ENCODE measurements at regions of chr3 and their contacts with region 1.

Region 1: DNA sequence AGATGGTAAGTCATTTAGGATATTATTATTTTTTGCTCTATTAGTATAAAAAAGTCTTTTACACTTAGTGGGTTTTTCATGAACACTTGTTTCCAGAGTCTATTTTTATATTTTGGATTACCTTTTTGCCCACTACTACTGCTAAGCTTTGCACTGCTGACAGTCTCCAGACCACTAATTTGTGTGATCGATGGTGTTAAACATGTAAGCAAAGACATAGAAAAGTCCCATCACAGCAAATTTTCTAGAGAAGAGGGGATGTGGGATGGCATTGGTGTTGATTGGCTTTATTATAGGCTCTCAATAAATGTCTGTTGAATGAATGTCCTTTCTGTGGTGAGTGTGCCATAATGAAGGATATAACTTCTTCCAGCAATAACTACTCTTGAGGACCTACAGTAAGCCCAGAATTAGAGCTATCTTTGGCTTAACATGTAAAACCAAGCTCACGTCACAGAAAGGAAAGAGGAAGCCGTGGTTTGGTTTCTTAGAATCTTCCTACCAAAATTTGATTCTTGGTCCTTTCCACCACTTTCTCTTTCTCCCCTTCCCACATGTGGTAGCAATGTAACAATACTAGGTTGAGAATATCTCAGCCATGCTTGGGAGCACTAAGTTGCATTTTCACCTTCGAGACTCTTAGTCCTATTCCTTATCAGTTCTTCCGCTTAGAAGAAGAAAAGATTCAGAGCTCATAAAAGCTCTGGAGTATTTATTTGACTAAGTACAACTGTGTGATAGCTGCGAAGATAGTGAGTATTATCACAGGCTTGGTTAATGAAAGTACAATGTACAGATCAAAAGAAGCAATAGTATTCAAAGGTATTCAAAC is 90.6 kb upstream of the UMPS start:
- DNase-seq: no peak
- H3K4me3 Mint-ChIP-seq: peak overlapping the region; percentile 62
- H3K27ac Mint-ChIP-seq: peak overlapping the region; percentile 80
- H3K4me1 Mint-ChIP-seq: peaks cover 52% of the 10 kb centered on the region
- H3K27me3 Mint-ChIP-seq: peaks cover 52% of the 10 kb centered on the region

Region 2: DNA sequence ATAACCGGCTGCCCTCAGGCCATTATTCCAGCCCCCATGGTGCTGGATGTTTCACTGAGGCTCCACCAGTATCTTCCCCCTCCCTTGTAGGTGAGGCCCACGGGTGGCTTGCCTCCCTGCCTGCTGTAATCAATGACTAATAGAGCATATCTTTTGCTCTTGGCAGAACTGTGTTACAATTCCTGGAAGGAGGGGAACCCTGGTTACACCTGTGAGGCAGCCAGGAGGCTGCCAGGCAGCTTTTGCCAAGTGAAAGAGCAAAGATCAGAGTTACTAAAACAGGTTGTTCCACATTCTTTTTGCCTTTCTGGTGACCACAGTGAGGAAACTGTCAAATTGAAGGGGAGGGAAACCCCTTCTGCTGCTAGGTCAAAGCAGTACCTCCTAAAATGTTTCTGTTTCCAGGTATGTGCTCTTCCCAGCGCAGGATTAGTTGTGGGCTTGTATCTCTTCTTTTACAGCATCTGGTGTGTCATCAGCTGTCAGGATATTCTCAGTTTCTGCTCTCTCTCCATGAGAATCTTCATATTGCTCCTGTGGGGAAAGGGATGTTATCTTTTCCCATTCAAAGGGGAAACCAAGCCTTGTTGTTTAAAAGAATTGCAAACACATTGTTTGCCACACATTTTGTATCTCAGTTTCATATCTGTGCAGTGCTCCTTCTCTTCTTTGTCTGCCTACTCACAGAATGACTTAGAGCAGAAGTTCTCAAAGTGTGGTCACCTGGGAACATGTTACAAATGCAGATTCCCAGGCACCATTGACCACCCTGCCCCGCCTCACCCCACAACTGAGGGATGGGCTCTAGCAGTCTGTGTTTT is 46.8 kb before region 1 on chr3:
- intact Hi-C with region 1: loop called (anchors 1 kb)
- DNase-seq: no peak
- H3K4me3 Mint-ChIP-seq: no peak overlapping the region
- H3K27ac Mint-ChIP-seq: no peak overlapping the region
- H3K4me1 Mint-ChIP-seq: peaks cover 16% of the 10 kb centered on the region
- H3K27me3 Mint-ChIP-seq: peaks cover 21% of the 10 kb centered on the region

Region 3: GRCh38 chr3:124620600-124621063 is 19.0 kb before region 1 on chr3:
- intact Hi-C with region 1: loop called (anchors 1 kb)
- DNase-seq: peak; percentile 11
- H3K4me3 Mint-ChIP-seq: peak overlapping the region; percentile 42
- H3K27ac Mint-ChIP-seq: peak overlapping the region; percentile 73
- H3K4me1 Mint-ChIP-seq: peaks cover 22% of the 10 kb centered on the region
- H3K27me3 Mint-ChIP-seq: peaks cover 6% of the 10 kb centered on the region

Region 4: DNA sequence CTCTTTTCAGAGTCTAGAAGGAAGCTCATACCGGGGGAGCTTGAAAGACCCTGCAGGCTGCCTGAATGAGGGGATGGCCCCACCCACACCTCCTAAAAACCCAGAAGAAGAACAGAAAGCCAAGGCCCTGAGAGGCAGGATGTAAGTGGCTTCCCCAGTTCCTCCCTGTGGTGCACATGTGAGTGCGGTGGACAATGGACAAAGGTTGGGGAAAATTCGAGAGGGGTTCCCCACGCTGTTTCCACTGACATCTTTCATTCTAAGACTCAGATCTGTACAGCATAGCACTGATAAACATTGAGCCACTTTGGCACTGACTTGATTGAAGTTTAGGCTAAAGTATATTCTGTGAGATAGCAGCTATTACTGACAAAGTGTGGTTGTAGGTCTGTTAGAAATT is 11.2 kb after region 1 on chr3:
- intact Hi-C with region 1: loop called (anchors 1 kb)
- DNase-seq: no peak
- H3K4me3 Mint-ChIP-seq: no peak overlapping the region
- H3K27ac Mint-ChIP-seq: peak overlapping the region; percentile 27
- H3K4me1 Mint-ChIP-seq: peaks cover 15% of the 10 kb centered on the region
- H3K27me3 Mint-ChIP-seq: peaks cover 32% of the 10 kb centered on the region

Measured in activated T-helper 1 cell treated with anti-CD3 and anti-CD28 coated beads, Interleukin-12 subunit alpha, Interleukin-12 subunit beta, Interleukin-2, Interleukin-4 antibody, amounts not matched to agents 30 ng/mL and 10 ng/mL and 1 ng/mL, durations not matched to agents 14 hours and 24 hours and 36 hours (primary cell).